ENCODE measurements at regions of chr14 and their contacts with region 1.

Region 1: DNA sequence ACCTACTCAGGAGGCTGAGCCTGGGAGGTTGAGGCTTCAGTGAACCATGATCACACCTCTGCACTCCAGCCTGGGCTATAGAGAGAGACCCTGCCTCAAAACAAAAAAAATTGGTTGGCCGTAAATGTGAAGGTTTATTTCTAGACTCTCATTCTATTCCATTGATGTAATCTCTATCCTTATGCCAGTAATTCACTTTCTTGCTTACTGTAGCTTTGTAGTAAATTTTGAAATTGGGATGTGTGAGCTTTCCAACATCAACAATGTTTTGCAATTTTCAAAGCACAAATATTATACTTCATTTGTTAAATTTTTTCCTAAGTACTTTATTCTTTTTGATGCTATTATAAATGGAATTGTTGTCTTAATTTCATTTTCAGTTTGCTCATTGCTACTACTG is 24.6 kb downstream of the LIN52 start:
- DNase-seq: no peak
- ATAC-seq: no peak
- H3K4me3 ChIP-seq: no peak overlapping the region
- H3K27ac ChIP-seq: no peak overlapping the region
- H3K4me1 ChIP-seq: no peaks in the 10 kb centered on the region
- CTCF ChIP-seq: no peak
- EP300 ChIP-seq: no peak
- POLR2A ChIP-seq: no peak
- RAD21 ChIP-seq: no peak

Region 2: GRCh38 chr14:74089251-74090020 is 19.9 kb before region 1 on chr14:
- CTCF ChIA-PET with region 1: interaction called, 18 read pairs
- POLR2A ChIA-PET with region 1: no interaction called
- DNase-seq: no peak
- ATAC-seq: no peak
- H3K4me3 ChIP-seq: no peak overlapping the region
- H3K27ac ChIP-seq: no peak overlapping the region
- H3K4me1 ChIP-seq: peaks cover 7% of the 10 kb centered on the region; the same call in 1 of the 3 replicates
- CTCF ChIP-seq: no peak
- EP300 ChIP-seq: no peak
- POLR2A ChIP-seq: no peak
- RAD21 ChIP-seq: no peak

Region 3: DNA sequence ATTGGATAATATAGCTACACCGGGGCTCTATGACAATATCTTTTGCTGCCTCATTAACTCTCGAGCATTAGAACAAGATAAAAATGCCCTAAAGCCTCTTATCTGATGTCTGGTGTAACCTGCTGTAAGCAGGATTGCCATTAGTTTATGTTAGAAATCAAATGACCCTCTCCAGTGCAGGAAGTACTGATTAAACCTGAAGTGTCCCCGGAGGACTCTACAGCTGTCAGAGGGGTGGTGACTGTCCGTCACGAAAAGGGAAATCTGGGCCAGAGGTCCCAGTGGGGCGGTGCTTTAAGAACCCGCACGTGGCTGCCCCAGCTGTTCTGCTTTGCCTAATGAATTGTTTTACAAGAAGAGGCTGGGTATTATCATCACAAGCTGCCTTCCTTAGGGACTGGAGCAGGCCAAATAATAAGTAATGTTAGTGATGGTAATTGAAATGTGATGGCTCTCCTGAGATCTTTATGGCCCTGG is 31.0 kb after region 1 on chr14:
- CTCF ChIA-PET with region 1: interaction called, 13 read pairs
- POLR2A ChIA-PET with region 1: no interaction called
- DNase-seq: no peak
- ATAC-seq: no peak
- H3K4me3 ChIP-seq: no peak overlapping the region
- H3K27ac ChIP-seq: no peak overlapping the region
- H3K4me1 ChIP-seq: no peaks in the 10 kb centered on the region
- CTCF ChIP-seq: no peak
- EP300 ChIP-seq: no peak
- POLR2A ChIP-seq: no peak
- RAD21 ChIP-seq: no peak

Region 4: GRCh38 chr14:74155287-74155686 is 45.9 kb after region 1 on chr14:
- CTCF ChIA-PET with region 1: no interaction called
- POLR2A ChIA-PET with region 1: no interaction called
- DNase-seq: no peak
- ATAC-seq: no peak
- H3K4me3 ChIP-seq: no peak overlapping the region
- H3K27ac ChIP-seq: no peak overlapping the region
- H3K4me1 ChIP-seq: no peaks in the 10 kb centered on the region
- CTCF ChIP-seq: no peak
- EP300 ChIP-seq: no peak
- POLR2A ChIP-seq: no peak
- RAD21 ChIP-seq: no peak

Region 5: GRCh38 chr14:74240794-74241651 is 131.7 kb after region 1 on chr14:
- CTCF ChIA-PET with region 1: interaction called, 13 read pairs
- POLR2A ChIA-PET with region 1: no interaction called
- DNase-seq: no peak
- ATAC-seq: peak in 1 of 2 experiments; percentile 30; a peak in 3 of 6 replicates
- H3K4me3 ChIP-seq: 0 out of 3 replicates have a peak overlapping the region, but pooled peaks have one; percentile 8
- H3K27ac ChIP-seq: no peak overlapping the region
- H3K4me1 ChIP-seq: no peaks in the 10 kb centered on the region
- CTCF ChIP-seq: no peak
- EP300 ChIP-seq: no peak
- POLR2A ChIP-seq: no peak
- RAD21 ChIP-seq: no peak

Region 6: DNA sequence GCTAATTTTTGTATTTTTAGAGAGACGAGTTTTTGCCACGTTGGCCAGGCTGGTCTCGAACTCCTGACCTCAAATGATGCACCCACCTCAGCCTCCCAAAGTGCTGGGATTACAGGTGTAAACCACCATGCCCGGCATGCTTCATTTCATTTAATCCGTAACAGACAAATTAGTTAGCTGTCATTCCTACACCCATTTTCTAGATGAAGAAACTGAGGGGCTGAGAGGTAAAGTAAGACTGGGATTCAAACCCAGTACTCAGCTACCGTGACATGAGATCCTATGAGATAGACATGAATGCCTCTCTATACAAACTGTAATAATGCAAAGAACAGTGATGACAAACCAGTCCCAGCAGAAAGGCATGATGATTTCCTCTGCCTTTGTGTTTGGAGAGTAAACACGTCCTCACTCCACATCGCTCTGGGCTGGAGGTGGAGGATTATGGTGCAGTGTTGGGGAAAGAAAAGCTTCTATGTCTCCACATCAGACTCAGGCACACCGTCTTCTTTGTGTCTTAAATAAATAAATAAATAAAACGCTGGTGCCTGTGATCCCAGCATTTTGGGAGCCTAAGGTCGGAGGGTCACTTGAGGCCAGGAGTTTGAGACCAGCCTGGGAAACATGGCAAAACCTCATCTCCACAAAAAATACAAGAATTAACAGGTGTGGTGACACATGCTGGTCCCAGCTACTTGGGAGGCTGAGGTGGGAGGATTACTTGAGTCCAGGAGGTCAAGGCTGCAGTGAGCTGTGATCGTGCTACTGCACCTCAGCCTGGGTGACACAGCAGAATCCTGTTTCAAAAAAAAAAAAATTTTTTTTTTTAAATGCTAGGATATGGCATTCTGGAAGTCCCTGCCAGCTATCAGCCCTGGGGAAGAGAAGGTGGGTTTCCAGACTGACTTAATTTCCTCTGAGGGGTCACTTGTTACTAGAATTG is 140.3 kb after region 1 on chr14:
- CTCF ChIA-PET with region 1: interaction called, 53 read pairs
- POLR2A ChIA-PET with region 1: no interaction called
- DNase-seq: peak in 1 of 2 experiments; percentile 34
- ATAC-seq: no peak
- H3K4me3 ChIP-seq: no peak overlapping the region
- H3K27ac ChIP-seq: 0 out of 6 replicates have a peak overlapping the region, but pooled peaks of 1 of the 2 experiments have one; percentile 6
- H3K4me1 ChIP-seq: peaks cover 13% of the 10 kb centered on the region; the same call in 1 of the 3 replicates
- CTCF ChIP-seq: no peak
- EP300 ChIP-seq: no peak
- POLR2A ChIP-seq: no peak
- RAD21 ChIP-seq: no peak

Region 7: GRCh38 chr14:74302634-74303577 is 193.5 kb after region 1 on chr14 and contains the start of gene ABCD4:
- CTCF ChIA-PET with region 1: interaction called, 32 read pairs
- POLR2A ChIA-PET with region 1: no interaction called
- DNase-seq: peak; percentile 85 to 93
- ATAC-seq: peak; percentile 98 to 99
- H3K4me3 ChIP-seq: peak within 1 kb of the TSS; percentile 96
- H3K27ac ChIP-seq: peak within 1 kb of the TSS; percentile 87 to 89
- H3K4me1 ChIP-seq: peaks cover 2% of the 10 kb centered on the region; the same call in 1 of the 3 replicates
- CTCF ChIP-seq: peak; percentile 83
- EP300 ChIP-seq: no peak
- POLR2A ChIP-seq: peak; percentile 93
- RAD21 ChIP-seq: no peak
- polyA plus RNA-seq, gene ABCD4: 13.9 and 22.7 TPM in 2 replicates

Measured in A549 (cell line).